ENCODE measurements at regions of chr2 and their contacts with region 1.

Region 1: DNA sequence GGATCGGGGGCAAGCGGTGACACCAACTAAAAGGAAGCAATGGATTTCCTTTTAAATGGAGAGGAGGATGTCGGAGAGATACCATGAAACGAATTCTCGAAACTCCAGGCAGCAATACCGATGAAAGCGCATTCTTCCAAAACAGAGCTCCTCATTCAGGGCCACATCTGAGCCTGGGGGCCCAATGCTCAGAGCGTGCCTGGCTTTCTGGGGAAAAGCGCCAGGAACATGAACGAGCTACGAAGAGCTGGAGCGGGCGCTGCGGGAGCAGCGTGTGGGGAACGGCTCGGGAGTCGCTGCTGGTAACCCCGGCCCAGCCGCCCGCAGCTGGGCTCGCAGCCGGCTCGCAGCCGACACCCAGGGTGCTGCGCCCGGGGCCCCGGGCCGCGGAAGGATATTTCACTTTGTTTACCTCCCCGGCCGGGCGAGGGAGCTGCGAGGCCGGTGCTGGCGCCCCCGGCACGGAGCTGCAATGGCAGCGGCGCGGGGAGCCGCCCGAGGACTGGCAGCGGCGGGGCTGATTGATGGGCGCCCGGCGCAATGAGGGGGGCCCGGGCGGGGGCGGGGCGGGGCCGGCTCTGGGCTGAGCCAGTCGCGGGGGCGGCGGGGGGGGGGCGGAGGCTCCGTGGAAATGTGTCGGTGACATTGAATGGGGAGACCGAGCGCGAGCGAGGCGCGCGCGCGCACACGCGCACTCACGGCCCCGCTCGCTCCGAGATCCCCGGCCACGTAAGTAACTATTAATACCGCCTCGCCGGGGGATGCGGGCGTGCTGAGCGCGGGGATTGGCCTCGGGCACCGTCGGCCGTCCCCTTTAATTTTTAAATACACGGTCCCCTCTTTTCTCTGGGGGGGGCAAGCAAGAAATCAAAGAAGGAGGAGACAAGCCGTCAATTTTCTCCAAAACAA is at the start of gene TRIB2:
- DNase-seq: peak; percentile 80 to 95
- ATAC-seq: peak; percentile 77 to 91 (median 84)
- H3K4me3 ChIP-seq: peak within 1 kb of the TSS; percentile 89
- H3K4me3 Mint-ChIP-seq: peak within 1 kb of the TSS; percentile 99
- H3K27ac ChIP-seq: peak within 1 kb of the TSS; percentile 88
- H3K27ac Mint-ChIP-seq: peak within 1 kb of the TSS; percentile 96 to 98
- H3K4me1 ChIP-seq: peaks cover 17% of the 10 kb centered on the region
- H3K4me1 Mint-ChIP-seq: peaks cover 61 to 72% of the 10 kb centered on the region in 2 donors
- H3K27me3 ChIP-seq: no peaks in the 10 kb centered on the region
- H3K27me3 Mint-ChIP-seq: no peaks in the 10 kb centered on the region
- CTCF ChIP-seq: peak; percentile 42
- total RNA-seq, gene TRIB2: 68.1 to 87.4 (median 84.5) TPM

Region 2: DNA sequence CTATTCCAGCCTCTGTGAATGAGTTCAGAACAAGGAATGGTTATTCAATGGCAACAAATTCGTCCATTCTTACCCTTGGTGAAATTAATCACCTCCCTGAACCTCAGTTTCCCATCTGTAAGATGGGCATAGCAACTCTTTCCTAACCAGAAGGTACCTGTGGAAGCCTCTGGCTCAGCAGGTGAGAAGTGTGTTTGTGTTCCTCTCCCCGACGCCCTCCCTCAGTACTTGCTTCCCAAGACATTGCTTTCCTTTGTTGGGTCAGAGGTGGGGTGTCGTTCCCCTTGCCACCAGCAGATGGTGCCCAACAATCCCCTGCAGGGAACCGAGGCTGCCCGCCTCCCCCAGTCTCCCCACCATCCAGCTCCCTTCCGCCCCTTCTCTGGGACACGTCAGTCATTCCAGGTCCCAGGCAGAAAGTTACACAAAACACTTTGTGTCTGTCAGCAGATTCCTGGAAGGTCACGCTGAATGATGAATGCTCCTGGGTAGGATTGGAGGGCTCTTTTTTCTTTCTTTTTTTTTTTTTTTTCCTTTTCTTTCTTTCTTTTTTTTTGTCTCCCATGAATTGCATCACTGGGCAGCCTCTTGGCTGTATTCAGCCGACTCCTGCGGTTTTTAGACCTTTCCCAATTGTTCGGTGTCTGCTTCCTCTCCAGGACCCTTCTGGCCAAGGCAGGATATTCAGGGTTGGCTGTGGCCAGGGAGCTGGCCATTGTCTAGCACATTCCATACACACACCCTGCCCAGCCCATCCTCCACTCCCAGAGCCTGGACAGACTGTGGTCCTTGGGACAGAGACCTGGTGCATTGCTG is 852.8 kb before region 1 on chr2:
- intact Hi-C with region 1: loop called (anchors 2 kb)
- DNase-seq: peak; percentile 52 to 86
- ATAC-seq: peak; percentile 83 to 95 (median 94)
- H3K4me3 ChIP-seq: no peak overlapping the region
- H3K4me3 Mint-ChIP-seq: peak overlapping the region; percentile 71
- H3K27ac ChIP-seq: no peak overlapping the region
- H3K27ac Mint-ChIP-seq: peak overlapping the region in 1 of 2 donors; percentile 60
- H3K4me1 ChIP-seq: peaks cover 12% of the 10 kb centered on the region
- H3K4me1 Mint-ChIP-seq: peaks cover 6 to 15% of the 10 kb centered on the region in 2 donors
- H3K27me3 ChIP-seq: no peaks in the 10 kb centered on the region
- H3K27me3 Mint-ChIP-seq: peaks cover 7 to 11% of the 10 kb centered on the region in 2 donors
- CTCF ChIP-seq: peak; percentile 94

Region 3: GRCh38 chr2:12057436-12058166 is 658.9 kb before region 1 on chr2:
- intact Hi-C with region 1: loop called (anchors 5 kb)
- DNase-seq: peak; percentile 55 to 76
- ATAC-seq: peak; percentile 89 to 93 (median 89)
- H3K4me3 ChIP-seq: no peak overlapping the region
- H3K4me3 Mint-ChIP-seq: peak overlapping the region; percentile 99
- H3K27ac ChIP-seq: peak overlapping the region; percentile 55
- H3K27ac Mint-ChIP-seq: peak overlapping the region; percentile 85 to 87
- H3K4me1 ChIP-seq: peaks cover 41% of the 10 kb centered on the region
- H3K4me1 Mint-ChIP-seq: peaks cover 90 to 92% of the 10 kb centered on the region in 2 donors
- H3K27me3 ChIP-seq: peaks cover 4% of the 10 kb centered on the region
- H3K27me3 Mint-ChIP-seq: peaks cover 0 to 22% of the 10 kb centered on the region in 2 donors
- CTCF ChIP-seq: no peak

Region 4: GRCh38 chr2:12416600-12416999 is 299.9 kb before region 1 on chr2:
- intact Hi-C with region 1: loop called (anchors 1 kb)
- DNase-seq: peak; percentile 36 to 80
- ATAC-seq: peak; percentile 48 to 73 (median 59)
- H3K4me3 ChIP-seq: no peak overlapping the region
- H3K4me3 Mint-ChIP-seq: peak overlapping the region; percentile 47
- H3K27ac ChIP-seq: no peak overlapping the region
- H3K27ac Mint-ChIP-seq: peak overlapping the region in 1 of 2 donors; percentile 8
- H3K4me1 ChIP-seq: peaks cover 7% of the 10 kb centered on the region
- H3K4me1 Mint-ChIP-seq: peaks cover 29 to 40% of the 10 kb centered on the region in 2 donors
- H3K27me3 ChIP-seq: no peaks in the 10 kb centered on the region
- H3K27me3 Mint-ChIP-seq: no peaks in the 10 kb centered on the region
- CTCF ChIP-seq: peak; percentile 65

Region 5: GRCh38 chr2:12587729-12588522 is 128.6 kb before region 1 on chr2:
- intact Hi-C with region 1: loop called (anchors 5 kb)
- DNase-seq: peak in 1 of 2 donors; percentile 32
- ATAC-seq: peak; percentile 35 to 64 (median 42)
- H3K4me3 ChIP-seq: no peak overlapping the region
- H3K4me3 Mint-ChIP-seq: no peak overlapping the region
- H3K27ac ChIP-seq: no peak overlapping the region
- H3K27ac Mint-ChIP-seq: peak overlapping the region in 1 of 2 donors; percentile 68
- H3K4me1 ChIP-seq: peaks cover 12% of the 10 kb centered on the region
- H3K4me1 Mint-ChIP-seq: peaks cover 28% of the 10 kb centered on the region in 2 donors
- H3K27me3 ChIP-seq: no peaks in the 10 kb centered on the region
- H3K27me3 Mint-ChIP-seq: peaks cover 0 to 3% of the 10 kb centered on the region in 2 donors
- CTCF ChIP-seq: no peak

Region 6: GRCh38 chr2:12636837-12637581 is 79.5 kb before region 1 on chr2:
- intact Hi-C with region 1: no loop called
- DNase-seq: no peak
- ATAC-seq: no peak
- H3K4me3 ChIP-seq: no peak overlapping the region
- H3K4me3 Mint-ChIP-seq: no peak overlapping the region
- H3K27ac ChIP-seq: no peak overlapping the region
- H3K27ac Mint-ChIP-seq: no peak overlapping the region
- H3K4me1 ChIP-seq: no peaks in the 10 kb centered on the region
- H3K4me1 Mint-ChIP-seq: peaks cover 0 to 7% of the 10 kb centered on the region in 2 donors
- H3K27me3 ChIP-seq: no peaks in the 10 kb centered on the region
- H3K27me3 Mint-ChIP-seq: peaks cover 5 to 7% of the 10 kb centered on the region in 2 donors
- CTCF ChIP-seq: no peak

Measured in natural killer cell (primary cell).